B cell (primary cell): ENCODE measurements at regions of chr12 and their contacts with region 1.

Region 1: DNA sequence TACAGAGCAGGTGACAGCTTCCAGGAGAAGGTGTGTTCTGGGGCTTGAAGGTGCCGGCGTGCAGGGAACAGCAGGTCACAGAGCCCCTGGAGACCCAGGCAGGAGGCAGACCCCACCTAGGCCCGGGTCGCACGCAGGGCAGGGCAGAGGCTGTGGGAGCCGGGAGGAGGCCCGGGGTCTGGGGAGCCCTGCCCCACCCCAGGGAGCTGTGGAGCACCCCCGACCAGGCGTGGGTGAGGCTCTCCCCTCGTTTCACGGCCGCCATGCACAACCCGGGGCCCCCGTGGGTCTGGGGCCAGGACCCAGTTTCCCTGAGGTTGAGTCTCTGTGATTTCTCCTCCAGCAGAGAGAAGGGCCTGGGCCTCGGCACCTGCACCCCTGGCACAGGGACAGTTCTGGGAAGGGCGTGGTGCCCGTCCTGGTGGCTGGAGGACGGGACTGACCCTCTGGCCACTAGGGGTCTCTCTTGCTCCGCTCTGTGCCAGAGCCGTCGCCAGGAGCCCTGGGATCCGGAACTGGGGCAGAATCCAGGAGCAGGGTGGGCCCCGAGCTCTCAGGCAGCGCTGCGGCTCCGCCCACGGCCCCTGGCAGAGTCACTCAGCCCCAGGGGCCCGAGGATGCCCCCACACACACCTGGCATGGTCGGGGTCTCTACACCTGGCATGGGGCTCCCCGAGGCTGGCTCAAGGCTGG is 75.2 kb upstream of the FBRSL1 start:
- DNase-seq: peak; percentile 86
- ATAC-seq: peak; percentile 91
- H3K4me3 ChIP-seq: peak overlapping the region in 3 of 5 experiments; percentile 11 to 22 (median 15)
- H3K4me3 Mint-ChIP-seq: no peak overlapping the region
- H3K27ac ChIP-seq: no peak overlapping the region
- H3K27ac Mint-ChIP-seq: no peak overlapping the region
- H3K4me1 ChIP-seq: peaks cover 15 to 20% of the 10 kb centered on the region in 2 donors
- H3K4me1 Mint-ChIP-seq: peaks cover 7% of the 10 kb centered on the region
- H3K27me3 ChIP-seq: peaks cover 0 to 4% (median 0%) of the 10 kb centered on the region in 4 experiments
- H3K27me3 Mint-ChIP-seq: no peaks in the 10 kb centered on the region
- CTCF ChIP-seq: peak; percentile 86

Region 2: GRCh38 chr12:132153501-132154340 is 261.1 kb before region 1 on chr12:
- CTCF ChIA-PET with region 1: interaction called, 29 read pairs
- POLR2A ChIA-PET with region 1: no interaction called
- intact Hi-C with region 1: loop called (anchors 2 kb)
- DNase-seq: peak; percentile 84
- ATAC-seq: peak; percentile 94
- H3K4me3 ChIP-seq: peak overlapping the region in 2 of 5 experiments; percentile 20 to 37
- H3K4me3 Mint-ChIP-seq: peak overlapping the region; percentile 54
- H3K27ac ChIP-seq: no peak overlapping the region
- H3K27ac Mint-ChIP-seq: no peak overlapping the region
- H3K4me1 ChIP-seq: peaks cover 3 to 11% of the 10 kb centered on the region in 2 donors
- H3K4me1 Mint-ChIP-seq: peaks cover 9% of the 10 kb centered on the region
- H3K27me3 ChIP-seq: no peaks in the 10 kb centered on the region
- H3K27me3 Mint-ChIP-seq: no peaks in the 10 kb centered on the region
- CTCF ChIP-seq: peak; percentile 91

Region 3: DNA sequence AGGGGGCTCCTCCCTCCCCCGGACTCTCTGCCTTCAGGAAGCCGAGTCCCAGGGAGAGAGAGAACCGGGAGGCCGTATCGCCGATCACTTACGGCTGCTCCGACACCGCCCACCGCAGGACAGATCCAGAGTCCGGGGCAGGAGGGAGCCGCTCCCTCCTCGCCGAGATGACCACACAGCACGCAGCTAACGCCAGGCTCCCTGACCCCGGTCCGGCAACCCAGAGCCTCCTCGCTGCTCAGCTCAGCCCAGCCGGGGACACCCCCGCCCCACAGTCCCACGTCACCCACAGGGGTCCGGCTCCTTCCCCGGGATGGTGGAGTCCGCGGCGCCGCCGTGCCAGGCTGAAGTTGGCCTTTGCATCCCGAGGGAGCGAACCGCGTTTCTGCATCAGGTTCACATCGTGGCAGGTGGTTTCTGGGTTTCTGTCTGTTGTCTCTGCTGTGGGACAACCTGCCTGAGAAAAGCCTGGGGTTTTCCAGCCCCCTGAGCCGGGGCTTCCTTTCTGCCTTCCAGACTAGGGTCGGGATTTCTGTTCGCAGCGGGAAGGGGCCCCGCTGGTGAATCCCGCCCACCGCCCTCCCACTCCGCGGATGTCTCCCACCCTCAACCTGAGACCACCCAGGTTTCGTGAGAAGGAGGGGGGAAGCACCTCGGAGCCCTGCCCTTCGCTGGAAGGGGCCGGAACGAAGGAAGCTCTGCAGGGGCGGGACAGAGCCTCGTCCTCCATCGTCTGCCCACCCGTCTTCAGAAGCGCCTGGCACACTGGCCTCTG is 209.3 kb before region 1 on chr12:
- CTCF ChIA-PET with region 1: no interaction called
- POLR2A ChIA-PET with region 1: no interaction called
- intact Hi-C with region 1: no loop called
- DNase-seq: no peak
- ATAC-seq: no peak
- H3K4me3 ChIP-seq: no peak overlapping the region
- H3K4me3 Mint-ChIP-seq: no peak overlapping the region
- H3K27ac ChIP-seq: no peak overlapping the region
- H3K27ac Mint-ChIP-seq: no peak overlapping the region
- H3K4me1 ChIP-seq: peaks cover 9 to 15% of the 10 kb centered on the region in 2 donors
- H3K4me1 Mint-ChIP-seq: no peaks in the 10 kb centered on the region
- H3K27me3 ChIP-seq: peaks cover 0 to 44% (median 13%) of the 10 kb centered on the region in 4 experiments
- H3K27me3 Mint-ChIP-seq: peaks cover 31% of the 10 kb centered on the region
- CTCF ChIP-seq: no peak

Region 4: GRCh38 chr12:132470978-132471857 is 56.4 kb after region 1 on chr12:
- CTCF ChIA-PET with region 1: interaction called, 12 read pairs
- POLR2A ChIA-PET with region 1: interaction called, 4 read pairs
- intact Hi-C with region 1: no loop called
- DNase-seq: peak; percentile 87
- ATAC-seq: peak; percentile 70
- H3K4me3 ChIP-seq: peak overlapping the region in 2 of 5 experiments; percentile 42 to 55
- H3K4me3 Mint-ChIP-seq: peak overlapping the region; percentile 64
- H3K27ac ChIP-seq: peak overlapping the region; percentile 75 to 83
- H3K27ac Mint-ChIP-seq: peak overlapping the region; percentile 92
- H3K4me1 ChIP-seq: peaks cover 59 to 76% of the 10 kb centered on the region in 2 donors
- H3K4me1 Mint-ChIP-seq: peaks cover 55% of the 10 kb centered on the region
- H3K27me3 ChIP-seq: no peaks in the 10 kb centered on the region
- H3K27me3 Mint-ChIP-seq: no peaks in the 10 kb centered on the region
- CTCF ChIP-seq: no peak

Region 5: GRCh38 chr12:132517013-132517739 is 102.4 kb after region 1 on chr12:
- CTCF ChIA-PET with region 1: interaction called, 236 read pairs
- POLR2A ChIA-PET with region 1: no interaction called
- intact Hi-C with region 1: no loop called
- DNase-seq: no peak
- ATAC-seq: no peak
- H3K4me3 ChIP-seq: no peak overlapping the region
- H3K4me3 Mint-ChIP-seq: no peak overlapping the region
- H3K27ac ChIP-seq: no peak overlapping the region
- H3K27ac Mint-ChIP-seq: no peak overlapping the region
- H3K4me1 ChIP-seq: no peaks in the 10 kb centered on the region
- H3K4me1 Mint-ChIP-seq: peaks cover 8% of the 10 kb centered on the region
- H3K27me3 ChIP-seq: no peaks in the 10 kb centered on the region
- H3K27me3 Mint-ChIP-seq: no peaks in the 10 kb centered on the region
- CTCF ChIP-seq: no peak

Region 6: DNA sequence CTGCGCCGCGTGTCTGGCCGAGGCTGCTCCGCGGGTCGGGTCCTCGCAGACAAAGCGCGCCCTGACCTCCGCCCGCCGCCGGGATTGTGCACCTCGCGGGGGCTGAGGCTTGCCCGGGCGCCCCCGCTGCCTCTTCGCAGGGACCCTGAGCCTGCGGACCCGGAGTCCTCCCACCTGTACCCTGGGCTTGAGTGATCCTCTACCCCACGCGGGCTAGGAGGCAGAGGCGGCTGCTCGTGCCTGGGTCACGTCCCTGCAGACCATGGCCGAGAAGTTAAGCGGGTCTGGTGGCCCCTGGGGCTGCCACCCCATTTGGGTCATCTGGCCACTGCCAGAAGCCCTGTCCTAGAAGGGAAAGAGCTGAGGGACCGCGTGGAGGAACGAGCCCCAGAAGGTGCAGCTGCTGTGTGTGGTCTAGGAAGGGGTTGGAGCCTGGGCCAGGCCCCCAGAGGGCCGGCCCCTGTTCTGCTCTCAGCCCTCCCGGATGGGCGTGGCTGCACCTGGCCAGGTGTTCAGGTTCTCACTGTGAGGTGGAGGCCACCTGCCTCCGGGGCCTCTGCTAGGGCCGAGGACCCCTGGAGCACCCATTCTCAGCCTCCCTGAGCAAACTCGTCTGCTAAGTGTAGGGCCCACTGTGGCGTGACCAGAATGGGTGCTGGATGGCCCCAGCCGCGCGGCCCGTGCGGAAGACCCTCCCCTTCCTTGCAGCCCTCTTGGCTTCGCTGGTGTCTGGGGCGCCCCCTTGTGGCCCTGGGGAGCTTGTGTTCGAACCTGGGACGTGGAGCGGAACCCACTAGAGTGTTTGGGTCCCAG is 146.0 kb after region 1 on chr12:
- CTCF ChIA-PET with region 1: interaction called, 57 read pairs
- POLR2A ChIA-PET with region 1: interaction called, 4 read pairs
- intact Hi-C with region 1: loop called (anchors 1 kb)
- DNase-seq: peak; percentile 88
- ATAC-seq: peak; percentile 59
- H3K4me3 ChIP-seq: peak overlapping the region in 4 of 5 experiments; percentile 44 to 64 (median 58)
- H3K4me3 Mint-ChIP-seq: peak overlapping the region; percentile 83
- H3K27ac ChIP-seq: peak overlapping the region in 1 of 2 donors; percentile 18
- H3K27ac Mint-ChIP-seq: peak overlapping the region; percentile 67
- H3K4me1 ChIP-seq: peaks cover 27 to 35% of the 10 kb centered on the region in 2 donors
- H3K4me1 Mint-ChIP-seq: peaks cover 30% of the 10 kb centered on the region
- H3K27me3 ChIP-seq: no peaks in the 10 kb centered on the region
- H3K27me3 Mint-ChIP-seq: no peaks in the 10 kb centered on the region
- CTCF ChIP-seq: peak; percentile 83

Region 7: GRCh38 chr12:132638541-132639418 is 224.0 kb after region 1 on chr12:
- CTCF ChIA-PET with region 1: interaction called, 12 read pairs
- POLR2A ChIA-PET with region 1: no interaction called
- intact Hi-C with region 1: no loop called
- DNase-seq: no peak
- ATAC-seq: no peak
- H3K4me3 ChIP-seq: no peak overlapping the region
- H3K4me3 Mint-ChIP-seq: no peak overlapping the region
- H3K27ac ChIP-seq: no peak overlapping the region
- H3K27ac Mint-ChIP-seq: no peak overlapping the region
- H3K4me1 ChIP-seq: peaks cover 0 to 11% of the 10 kb centered on the region in 2 donors
- H3K4me1 Mint-ChIP-seq: peaks cover 3% of the 10 kb centered on the region
- H3K27me3 ChIP-seq: no peaks in the 10 kb centered on the region
- H3K27me3 Mint-ChIP-seq: no peaks in the 10 kb centered on the region
- CTCF ChIP-seq: peak; percentile 60